Transverse colon (tissue), 4 donors: ENCODE measurements at regions of chr15 and their contacts with region 1.

Region 1: DNA sequence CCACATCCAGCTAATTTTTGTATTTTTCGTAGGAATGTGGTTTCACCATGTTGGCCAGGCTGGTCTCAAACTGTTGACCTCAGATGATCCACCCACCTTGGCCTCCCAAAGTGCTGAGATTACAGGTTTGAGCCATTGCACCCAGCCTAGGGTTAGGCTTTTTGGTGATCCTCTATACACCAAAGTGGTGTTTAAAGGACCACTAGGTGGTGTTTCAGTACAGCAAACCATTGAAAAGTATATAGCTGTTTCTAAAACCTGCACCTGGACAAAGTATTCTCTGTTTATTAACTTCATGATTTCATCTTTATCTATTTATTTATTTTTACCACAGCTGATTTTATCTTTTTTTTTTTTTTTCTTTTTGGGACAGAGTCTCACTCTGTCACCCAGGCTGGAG is 68.4 kb downstream of the MINDY2 start:
- DNase-seq: no peak
- H3K4me3 ChIP-seq: no peak overlapping the region
- H3K27ac ChIP-seq: no peak overlapping the region
- H3K4me1 ChIP-seq: no peaks in the 10 kb centered on the region
- H3K27me3 ChIP-seq: no peaks in the 10 kb centered on the region
- CTCF ChIP-seq: no peak
- EP300 ChIP-seq: no peak
- POLR2A ChIP-seq: no peak

Region 2: GRCh38 chr15:58933281-58934113 is 94.0 kb after region 1 on chr15 and contains the start of gene SLTM:
- in situ Hi-C with region 1: loop called in 1 of 4 experiments (anchors 25 kb)
- intact Hi-C with region 1: no loop called
- DNase-seq: peak; percentile 95
- H3K4me3 ChIP-seq: peak within 1 kb of the TSS; percentile 74 to 96 (median 88)
- H3K27ac ChIP-seq: peak within 1 kb of the TSS; percentile 97 to 100 (median 100)
- H3K4me1 ChIP-seq: peaks cover 12 to 32% (median 20%) of the 10 kb centered on the region in 4 donors
- H3K27me3 ChIP-seq: no peaks in the 10 kb centered on the region
- CTCF ChIP-seq: peak; percentile 20 to 69 (median 45)
- EP300 ChIP-seq: no peak
- POLR2A ChIP-seq: peak; percentile 98
- total RNA-seq, gene SLTM: 91.9 to 447 (median 143) TPM

Region 3: DNA sequence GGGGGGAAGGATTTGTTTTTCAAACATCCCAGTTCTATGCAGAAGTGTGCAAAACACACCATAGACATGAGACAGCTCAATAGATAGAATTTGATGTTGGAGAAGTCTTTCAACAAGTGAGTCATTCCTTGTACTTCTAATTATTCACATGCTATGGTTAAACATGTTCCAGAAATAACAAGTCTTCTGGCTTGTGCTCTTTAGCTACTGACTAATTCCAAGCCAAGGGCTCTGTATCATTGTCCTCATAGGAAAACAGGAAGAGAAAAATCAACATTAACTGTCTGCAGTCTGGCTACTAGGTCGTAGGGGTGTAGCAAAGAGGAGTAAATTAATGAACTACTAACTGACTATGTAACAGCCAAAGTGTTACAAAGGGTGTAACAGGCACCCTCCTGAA is 393.0 kb after region 1 on chr15:
- in situ Hi-C with region 1: no loop called
- intact Hi-C with region 1: no loop called
- DNase-seq: no peak
- H3K4me3 ChIP-seq: no peak overlapping the region
- H3K27ac ChIP-seq: peak overlapping the region in 2 of 4 donors; percentile 19 to 27
- H3K4me1 ChIP-seq: peaks cover 0 to 14% (median 6%) of the 10 kb centered on the region in 4 donors
- H3K27me3 ChIP-seq: no peaks in the 10 kb centered on the region
- CTCF ChIP-seq: no peak
- EP300 ChIP-seq: no peak
- POLR2A ChIP-seq: no peak